Esophagus squamous epithelium (tissue), 5 donors: ENCODE measurements at regions of chr16 and their contacts with region 1.

Region 1: DNA sequence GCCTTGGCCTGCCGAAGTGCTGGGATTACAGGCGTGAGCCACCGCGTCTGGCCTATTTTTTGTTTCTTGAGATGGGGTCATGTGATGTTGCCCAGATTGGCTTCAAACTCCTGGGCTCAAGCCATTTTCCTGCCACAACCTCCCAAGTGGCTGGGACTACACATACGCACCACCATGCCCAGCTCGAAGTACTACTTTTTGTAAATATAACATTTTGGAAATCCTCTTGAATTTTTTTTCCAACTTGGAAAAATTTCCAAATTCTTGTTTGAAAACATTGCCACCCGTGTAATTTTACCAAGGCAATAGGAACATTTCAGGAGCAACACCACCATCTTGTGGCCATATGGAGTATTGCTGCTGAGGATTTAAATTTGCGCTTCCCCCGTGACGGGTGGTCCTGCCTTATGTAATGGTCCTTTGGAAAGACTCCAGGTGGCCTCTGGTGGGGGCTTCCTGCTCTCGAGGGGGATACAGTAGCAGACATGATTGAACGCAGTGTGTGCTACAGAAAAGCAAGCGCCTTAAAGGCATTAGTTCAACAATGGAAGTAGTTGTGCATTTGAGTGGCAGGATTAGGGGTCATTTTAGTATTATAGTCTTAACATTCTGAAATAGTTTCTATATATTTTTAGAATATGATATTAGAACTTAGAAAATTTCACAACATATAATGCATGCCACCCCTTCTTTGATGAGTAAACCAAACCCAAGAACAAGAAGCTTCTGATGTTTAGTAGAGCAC is 8.0 kb downstream of the FLYWCH1 start:
- DNase-seq: no peak
- H3K4me3 ChIP-seq: no peak overlapping the region
- H3K27ac ChIP-seq: peak overlapping the region; percentile 58 to 78 (median 77)
- H3K4me1 ChIP-seq: peaks cover 7 to 47% (median 28%) of the 10 kb centered on the region in 3 donors
- H3K27me3 ChIP-seq: no peaks in the 10 kb centered on the region
- CTCF ChIP-seq: peak; percentile 93 to 98 (median 96)
- POLR2A ChIP-seq: no peak

Region 2: DNA sequence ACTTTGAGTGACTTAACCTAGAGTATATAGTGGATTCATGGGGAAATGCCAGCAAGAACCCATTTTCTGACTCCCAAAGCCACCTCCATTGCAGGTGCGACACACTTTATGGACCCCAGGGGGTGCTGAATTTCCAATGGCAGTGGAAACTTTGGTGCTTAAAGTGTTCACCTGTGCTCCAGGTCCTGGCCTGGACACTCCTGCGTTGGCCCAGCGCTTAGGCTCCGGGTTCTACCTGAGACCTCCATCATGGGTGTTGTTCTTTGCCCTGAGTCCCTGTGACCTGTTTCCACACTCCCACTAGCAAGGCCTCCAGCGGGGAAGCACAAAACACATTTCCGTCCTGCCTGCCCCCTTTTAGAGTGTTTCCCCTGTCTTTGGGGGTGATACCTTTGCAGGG is 487.4 kb before region 1 on chr16:
- intact Hi-C with region 1: no loop called
- DNase-seq: no peak
- H3K4me3 ChIP-seq: no peak overlapping the region
- H3K27ac ChIP-seq: no peak overlapping the region
- H3K4me1 ChIP-seq: peaks cover 13 to 47% (median 13%) of the 10 kb centered on the region in 3 donors
- H3K27me3 ChIP-seq: no peaks in the 10 kb centered on the region
- CTCF ChIP-seq: no peak
- POLR2A ChIP-seq: no peak

Region 3: GRCh38 chr16:2874912-2875362 is 44.7 kb before region 1 on chr16:
- intact Hi-C with region 1: loop called (anchors 5 kb)
- DNase-seq: peak; percentile 14
- H3K4me3 ChIP-seq: no peak overlapping the region
- H3K27ac ChIP-seq: no peak overlapping the region
- H3K4me1 ChIP-seq: peaks cover 0 to 9% (median 5%) of the 10 kb centered on the region in 3 donors
- H3K27me3 ChIP-seq: peaks cover 0 to 3% (median 0%) of the 10 kb centered on the region in 4 donors
- CTCF ChIP-seq: peak; percentile 62 to 99 (median 96)
- POLR2A ChIP-seq: no peak

Region 4: DNA sequence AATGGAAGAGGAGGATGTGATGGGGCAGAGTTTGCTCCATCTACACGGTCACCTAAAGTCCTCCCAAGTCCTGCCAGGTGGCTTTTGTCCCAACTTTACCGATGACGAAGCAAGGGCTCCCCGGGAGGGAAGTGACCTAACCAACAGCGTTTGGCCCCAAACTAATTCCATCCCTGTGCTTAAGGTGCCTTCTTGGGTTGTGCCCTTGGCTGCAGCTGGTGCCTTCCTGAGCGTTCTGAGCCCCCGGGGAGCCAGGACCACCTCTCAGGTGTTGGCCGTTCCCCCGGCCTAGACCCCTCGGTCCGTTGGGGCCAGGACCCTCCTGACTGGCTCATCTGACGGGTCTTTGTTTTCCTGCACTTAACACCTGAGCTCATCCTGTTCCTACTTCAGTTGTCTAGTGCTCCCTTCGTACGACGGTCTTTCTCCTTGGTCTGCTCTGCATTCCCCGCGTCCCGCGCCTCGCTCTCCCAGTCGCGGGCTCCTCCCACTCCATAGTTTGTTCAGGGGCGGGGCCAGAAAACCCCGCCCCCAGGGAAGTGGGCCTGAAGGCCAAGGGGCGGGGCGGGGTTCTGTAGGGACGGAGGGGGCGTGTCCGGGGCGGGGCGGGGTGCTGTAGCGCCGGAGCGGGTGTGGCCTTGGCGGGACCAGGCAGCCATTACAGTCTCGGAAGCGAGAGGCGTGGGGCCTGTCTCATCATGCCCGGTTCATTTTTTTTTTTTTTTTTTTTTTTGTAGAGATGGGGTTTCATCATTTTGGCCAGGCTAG is 180.2 kb after region 1 on chr16:
- intact Hi-C with region 1: no loop called
- DNase-seq: peak; percentile 79
- H3K4me3 ChIP-seq: peak overlapping the region; percentile 3 to 53 (median 27)
- H3K27ac ChIP-seq: peak overlapping the region in 3 of 4 donors; percentile 20 to 53 (median 50)
- H3K4me1 ChIP-seq: peaks cover 6 to 45% (median 8%) of the 10 kb centered on the region in 3 donors
- H3K27me3 ChIP-seq: peaks cover 0 to 22% (median 0%) of the 10 kb centered on the region in 4 donors
- CTCF ChIP-seq: no peak
- POLR2A ChIP-seq: no peak

Region 5: DNA sequence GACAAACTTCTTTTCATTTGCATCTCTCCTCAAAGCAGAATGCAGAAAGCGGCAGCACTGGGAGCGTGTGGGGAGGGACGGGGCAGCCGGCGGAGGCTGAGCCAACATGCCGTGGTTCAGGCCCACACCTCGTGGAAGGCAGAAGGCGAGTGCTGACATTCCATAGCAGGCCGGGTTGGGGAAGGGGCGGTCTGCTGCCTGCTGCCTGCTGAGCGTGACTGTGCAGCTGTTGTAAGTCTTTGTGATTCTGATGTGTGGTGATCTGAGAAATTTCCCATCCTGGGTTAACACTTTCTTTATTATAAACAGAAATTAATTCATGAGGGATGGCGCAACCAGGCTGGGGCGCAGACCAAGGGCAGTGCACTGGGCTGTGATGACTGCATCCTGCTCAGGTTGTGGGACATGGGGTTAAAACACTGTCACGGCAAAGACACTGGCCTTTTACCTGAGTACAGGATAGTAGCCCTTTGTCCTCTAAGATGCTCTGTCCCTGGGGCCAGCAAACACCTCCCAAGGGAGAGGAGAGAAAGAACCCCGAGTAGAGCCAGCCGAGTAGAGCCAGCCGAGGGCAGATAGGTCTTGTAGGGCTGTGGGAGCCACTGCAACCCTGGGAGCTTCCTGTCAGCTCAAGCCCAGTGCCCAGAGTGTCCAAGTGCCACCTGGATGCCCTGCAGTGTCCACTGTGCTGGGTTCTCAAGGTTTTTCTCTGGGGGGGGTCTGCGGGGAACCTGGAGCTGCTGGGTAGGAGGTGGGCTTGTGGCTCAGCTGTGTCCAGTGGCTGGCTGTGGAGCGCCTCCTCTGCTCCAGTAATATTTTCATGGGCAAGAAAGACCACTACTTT is 726.0 kb after region 1 on chr16:
- intact Hi-C with region 1: no loop called
- DNase-seq: no peak
- H3K4me3 ChIP-seq: no peak overlapping the region
- H3K27ac ChIP-seq: peak overlapping the region in 2 of 4 donors; percentile 8 to 38
- H3K4me1 ChIP-seq: peaks cover 0 to 44% (median 11%) of the 10 kb centered on the region in 3 donors
- H3K27me3 ChIP-seq: no peaks in the 10 kb centered on the region
- CTCF ChIP-seq: no peak
- POLR2A ChIP-seq: no peak